Activated naive CD4-positive, alpha-beta T cell treated with anti-CD3 and anti-CD28 coated beads for 36 hours (primary cell): ENCODE measurements at regions of chr1 and their contacts with region 1.

Region 1: GRCh38 chr1:248471154-248471553 is 2.0 kb upstream of the OR2T3 start:
- DNase-seq: no peak
- H3K4me3 Mint-ChIP-seq: no peak overlapping the region
- H3K27ac Mint-ChIP-seq: no peak overlapping the region
- H3K4me1 Mint-ChIP-seq: no peaks in the 10 kb centered on the region
- H3K27me3 Mint-ChIP-seq: no peaks in the 10 kb centered on the region

Region 2: DNA sequence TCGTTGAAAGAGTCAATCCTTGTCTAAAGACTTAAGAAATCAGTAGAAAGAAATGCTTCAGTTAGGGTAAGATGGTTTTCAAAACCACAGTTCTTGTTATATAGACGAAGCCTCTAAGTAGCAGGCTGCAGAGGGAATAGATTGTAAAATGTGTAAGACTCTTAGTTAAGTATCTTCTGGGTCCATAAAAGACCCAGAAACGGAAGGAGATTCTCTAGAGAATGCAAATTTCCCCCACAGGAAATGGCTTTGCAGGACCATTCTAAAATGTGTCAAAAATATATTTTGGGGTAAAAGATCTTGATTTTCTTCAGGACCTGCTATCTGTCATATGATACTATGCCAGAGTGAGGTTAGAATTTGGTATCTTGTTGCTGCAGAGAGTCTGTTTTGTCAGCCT is 54.9 kb before region 1 on chr1:
- CTCF ChIA-PET with region 1: no interaction called
- intact Hi-C with region 1: loop called (anchors 10 kb)
- DNase-seq: no peak
- H3K4me3 Mint-ChIP-seq: no peak overlapping the region
- H3K27ac Mint-ChIP-seq: no peak overlapping the region
- H3K4me1 Mint-ChIP-seq: peaks cover 31% of the 10 kb centered on the region
- H3K27me3 Mint-ChIP-seq: no peaks in the 10 kb centered on the region

Region 3: DNA sequence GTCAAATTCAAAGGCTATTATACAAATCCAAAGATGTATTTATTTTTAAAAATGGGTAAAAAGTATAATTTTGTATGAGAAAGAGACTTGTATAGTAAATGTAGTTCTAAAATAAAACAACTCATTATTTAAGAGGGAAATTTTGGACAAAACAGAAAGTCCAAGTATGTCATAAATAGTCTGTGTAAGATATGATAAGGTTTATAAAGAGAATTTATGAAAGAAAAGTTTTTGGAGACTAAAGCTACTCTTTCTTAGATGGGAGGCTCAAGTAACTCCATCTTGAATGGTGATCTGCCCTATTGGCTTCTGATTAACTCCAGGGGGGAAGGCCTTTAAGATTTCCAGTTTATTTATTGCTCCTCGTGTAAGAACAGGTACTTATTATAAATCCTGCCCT is 198.8 kb after region 1 on chr1:
- CTCF ChIA-PET with region 1: no interaction called
- intact Hi-C with region 1: no loop called
- DNase-seq: no peak
- H3K4me3 Mint-ChIP-seq: no peak overlapping the region
- H3K27ac Mint-ChIP-seq: no peak overlapping the region
- H3K4me1 Mint-ChIP-seq: no peaks in the 10 kb centered on the region
- H3K27me3 Mint-ChIP-seq: no peaks in the 10 kb centered on the region